Spleen (tissue), 13 donors: ENCODE measurements at regions of chr17 and their contacts with region 1.

Region 1: DNA sequence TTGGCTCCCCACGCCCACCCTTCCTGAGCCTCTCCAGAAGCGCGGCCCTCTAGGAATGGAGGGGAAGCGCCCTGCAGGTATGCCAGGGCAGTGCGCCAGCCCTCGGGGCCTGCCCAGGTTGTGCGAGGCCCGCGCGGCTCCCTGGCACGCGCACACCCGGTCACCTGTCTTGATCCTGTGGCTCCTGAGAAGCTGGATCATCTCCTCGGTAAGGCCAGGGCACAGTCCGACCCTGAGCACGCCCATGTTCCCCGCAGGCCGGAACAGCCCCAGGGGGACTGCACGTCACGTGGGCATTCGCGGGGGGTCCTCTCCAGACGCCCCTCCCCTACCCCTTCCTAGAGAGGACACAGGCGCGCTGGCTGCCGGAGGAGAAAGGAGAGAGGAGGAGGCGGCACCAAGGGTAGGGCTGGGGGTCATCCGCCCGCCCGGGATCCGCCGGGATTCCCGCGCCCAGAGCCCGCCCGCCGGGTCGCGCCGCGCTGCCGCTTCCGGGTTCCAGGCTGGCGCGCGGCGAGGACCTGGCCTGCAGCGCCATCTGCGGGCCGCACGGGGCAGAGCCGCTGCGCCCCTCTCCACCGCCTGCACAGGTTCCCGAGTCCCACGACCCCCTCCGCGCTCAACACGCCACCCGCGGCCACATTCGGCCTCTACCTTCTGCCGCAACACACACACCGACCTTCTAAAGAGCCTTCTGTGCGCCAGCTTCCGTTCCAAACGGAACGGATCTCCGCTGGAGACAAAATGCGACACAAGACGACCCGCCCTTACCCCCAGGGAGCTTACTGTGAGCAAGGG is at the start of gene RAD51D:
- DNase-seq: peak; percentile 96
- H3K4me3 ChIP-seq: peak within 1 kb of the TSS; percentile 66 to 97 (median 88)
- H3K27ac ChIP-seq: peak within 1 kb of the TSS; percentile 68 to 92 (median 84)
- H3K4me1 ChIP-seq: peaks cover 12 to 45% (median 28%) of the 10 kb centered on the region in 6 donors
- H3K27me3 ChIP-seq: no peaks in the 10 kb centered on the region
- CTCF ChIP-seq: peak; percentile 85 to 99 (median 98)
- POLR2A ChIP-seq: peak in 1 of 3 donors; percentile 35
- total RNA-seq, gene RAD51D: 9.0 to 24.1 (median 14.9) TPM

Region 2: DNA sequence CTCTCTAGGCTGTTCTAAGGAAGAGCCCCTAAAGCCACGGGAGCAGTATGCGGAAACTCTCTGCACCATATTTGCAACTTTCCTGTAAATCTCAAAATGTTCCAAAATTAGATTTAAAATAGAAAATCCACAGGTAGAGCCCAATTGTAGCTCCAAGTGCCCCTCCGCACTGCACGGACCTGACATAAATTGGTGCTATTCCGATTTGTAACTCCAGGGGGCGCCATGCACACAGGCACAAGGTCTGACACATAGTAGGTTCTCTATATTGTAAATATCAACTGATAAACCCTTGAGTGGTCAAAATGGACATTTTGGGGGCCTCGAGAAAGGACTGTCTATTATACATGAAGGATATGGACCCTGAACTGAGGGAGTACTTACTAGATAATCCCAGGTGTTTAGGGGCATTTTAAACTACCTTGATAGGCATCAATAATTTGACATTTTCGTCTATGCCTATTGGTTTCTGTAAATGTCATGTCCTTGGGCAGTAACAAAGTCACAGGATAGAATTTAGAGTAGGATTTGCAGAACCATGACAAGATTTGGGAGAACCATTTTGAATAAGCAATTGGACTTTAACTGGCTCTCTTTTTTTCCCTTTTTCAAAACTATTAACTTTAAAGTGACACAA is 576.7 kb before region 1 on chr17:
- intact Hi-C with region 1: loop called (anchors 5 kb)
- DNase-seq: no peak
- H3K4me3 ChIP-seq: no peak overlapping the region
- H3K27ac ChIP-seq: no peak overlapping the region
- H3K4me1 ChIP-seq: no peaks in the 10 kb centered on the region
- H3K27me3 ChIP-seq: peaks cover 0 to 38% (median 4%) of the 10 kb centered on the region in 7 donors
- CTCF ChIP-seq: peak; percentile 36 to 83 (median 68)
- POLR2A ChIP-seq: no peak